Right cardiac atrium (tissue), 5 donors: ENCODE measurements at regions of chr19 and their contacts with region 1.

Region 1: DNA sequence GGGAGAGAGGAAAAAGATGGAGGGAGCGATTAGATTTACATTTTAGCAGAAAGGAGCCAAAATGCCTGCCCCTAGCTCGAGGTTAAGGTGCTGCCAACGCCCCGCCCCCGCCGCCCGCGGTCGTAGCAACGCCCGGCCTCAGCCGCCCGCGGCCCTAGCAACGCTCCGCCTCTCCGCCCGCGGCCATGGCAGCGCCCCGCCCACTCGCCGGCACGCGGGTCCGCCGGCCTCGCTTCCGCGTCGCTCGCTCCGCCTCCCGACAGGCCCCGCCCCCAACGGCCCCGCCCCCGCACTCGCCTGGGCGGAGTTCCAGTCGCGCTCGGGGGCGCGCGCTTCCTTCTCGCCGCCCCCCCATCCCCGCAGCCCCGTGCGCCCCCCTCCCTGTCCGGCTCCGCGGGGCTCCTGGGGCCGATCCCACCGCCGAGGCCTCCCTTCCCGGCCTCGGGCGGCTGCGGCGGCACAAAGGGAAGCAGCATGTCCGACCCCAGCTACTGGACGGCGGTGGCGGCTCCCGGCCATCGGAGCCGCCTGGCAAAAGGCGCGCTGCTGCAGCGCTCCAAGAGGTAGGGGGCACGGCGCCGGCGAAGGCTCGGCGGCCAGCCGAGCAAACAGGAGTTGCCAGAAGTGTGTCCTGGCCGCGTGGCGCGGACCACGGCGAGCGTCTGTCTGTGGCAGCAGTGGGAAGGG is 20.3 kb downstream of the MAST3 start:
- DNase-seq: peak; percentile 91 to 97 (median 97)
- ATAC-seq: peak; percentile 94
- H3K4me3 ChIP-seq: peak overlapping the region; percentile 83
- H3K27ac ChIP-seq: no peak overlapping the region
- H3K4me1 ChIP-seq: peaks cover 3% of the 10 kb centered on the region
- H3K27me3 ChIP-seq: no peaks in the 10 kb centered on the region

Region 2: DNA sequence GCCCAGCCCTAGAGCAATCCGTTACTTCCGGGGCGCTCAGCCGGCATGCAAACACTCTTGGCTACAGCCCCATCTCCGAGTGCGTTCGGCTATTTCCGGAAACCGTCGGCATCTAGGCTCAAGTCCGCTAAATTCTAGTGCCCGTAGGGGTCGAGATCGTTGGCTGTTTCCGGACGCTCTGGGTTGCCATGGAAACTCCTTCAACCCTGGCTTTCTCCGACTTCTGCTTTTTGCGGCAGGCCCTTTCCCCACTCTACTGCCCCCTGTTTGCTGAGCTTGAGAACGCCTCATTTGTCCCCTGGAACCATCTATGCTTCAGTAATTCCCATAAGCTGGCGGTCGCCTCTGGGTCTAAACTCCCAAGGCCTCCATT is 34.6 kb after region 1 on chr19:
- intact Hi-C with region 1: loop called in 2 of 4 experiments (anchors 5 kb)
- DNase-seq: peak; percentile 96 to 99 (median 98)
- ATAC-seq: peak; percentile 69 to 71
- H3K4me3 ChIP-seq: peak overlapping the region; percentile 84
- H3K27ac ChIP-seq: peak overlapping the region; percentile 99
- H3K4me1 ChIP-seq: peaks cover 11% of the 10 kb centered on the region
- H3K27me3 ChIP-seq: no peaks in the 10 kb centered on the region

Region 3: DNA sequence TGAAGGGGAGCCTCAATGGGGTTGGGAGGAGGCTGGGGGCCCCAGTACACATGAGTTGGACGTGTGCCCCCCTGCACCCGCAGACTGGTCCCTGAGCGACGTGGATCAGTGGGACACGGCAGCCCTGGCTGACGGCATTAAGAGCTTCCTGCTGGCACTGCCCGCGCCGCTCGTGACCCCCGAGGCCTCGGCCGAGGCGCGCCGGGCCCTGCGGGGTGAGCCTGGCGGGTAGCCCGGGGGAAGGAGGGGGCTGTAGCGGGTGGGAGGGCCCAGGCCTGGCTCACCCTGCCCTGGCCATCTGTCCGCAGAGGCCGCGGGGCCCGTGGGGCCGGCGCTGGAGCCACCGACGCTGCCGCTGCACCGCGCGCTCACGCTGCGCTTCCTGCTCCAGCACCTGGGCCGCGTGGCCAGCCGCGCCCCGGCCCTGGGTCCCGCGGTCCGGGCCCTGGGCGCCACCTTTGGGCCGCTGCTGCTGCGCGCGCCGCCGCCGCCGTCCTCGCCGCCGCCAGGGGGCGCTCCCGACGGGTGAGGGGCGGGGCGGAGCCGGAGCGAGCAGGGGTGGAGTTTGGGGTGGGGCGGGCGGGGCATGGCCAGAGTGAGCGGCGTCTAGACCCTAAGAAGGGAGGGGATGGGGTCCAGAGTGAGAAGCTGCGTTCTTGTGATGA is 43.3 kb after region 1 on chr19:
- intact Hi-C with region 1: loop called in 3 of 4 experiments (anchors 5 to 10 kb)
- DNase-seq: peak; percentile 74 to 92 (median 89)
- ATAC-seq: peak; percentile 71 to 78
- H3K4me3 ChIP-seq: peak overlapping the region; percentile 44
- H3K27ac ChIP-seq: peak overlapping the region; percentile 55
- H3K4me1 ChIP-seq: peaks cover 7% of the 10 kb centered on the region
- H3K27me3 ChIP-seq: no peaks in the 10 kb centered on the region

Region 4: DNA sequence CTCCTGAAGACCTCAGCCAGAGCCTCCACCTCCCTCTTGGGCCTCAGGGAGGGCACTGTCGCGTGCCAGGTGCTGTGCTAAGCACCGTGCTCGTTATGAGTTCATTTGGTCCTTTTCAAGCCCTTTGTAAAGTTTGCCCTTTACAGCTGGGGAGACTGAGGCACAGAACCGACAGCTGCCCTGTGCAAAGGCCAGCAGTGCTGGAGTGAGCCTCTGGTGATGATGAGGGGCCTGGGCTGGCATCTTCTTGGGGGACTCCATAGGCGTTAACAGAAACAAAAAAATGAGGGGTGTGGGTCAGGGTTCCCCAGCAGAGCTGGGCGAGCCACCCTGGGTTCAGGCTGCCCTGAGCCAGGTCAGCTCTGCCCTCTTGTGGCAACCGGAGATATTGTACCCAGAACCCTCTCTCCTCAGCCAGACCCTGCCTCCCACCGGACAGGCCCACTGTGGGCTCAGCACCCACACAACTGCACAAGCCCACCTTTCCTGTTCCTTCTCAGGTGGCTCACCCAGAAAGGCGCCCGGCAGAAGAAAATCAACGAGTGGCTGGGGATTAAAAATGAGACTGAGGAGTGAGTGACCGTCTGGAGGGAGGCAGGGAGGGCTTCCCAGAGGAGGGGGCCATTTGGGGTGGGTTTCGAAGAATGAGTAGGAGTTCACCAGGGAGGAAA is 50.3 kb after region 1 on chr19:
- intact Hi-C with region 1: loop called in 3 of 4 experiments (anchors 5 to 10 kb)
- DNase-seq: peak in 1 of 3 donors; percentile 74
- ATAC-seq: peak; percentile 55 to 59
- H3K4me3 ChIP-seq: no peak overlapping the region
- H3K27ac ChIP-seq: no peak overlapping the region
- H3K4me1 ChIP-seq: no peaks in the 10 kb centered on the region
- H3K27me3 ChIP-seq: no peaks in the 10 kb centered on the region

Region 5: DNA sequence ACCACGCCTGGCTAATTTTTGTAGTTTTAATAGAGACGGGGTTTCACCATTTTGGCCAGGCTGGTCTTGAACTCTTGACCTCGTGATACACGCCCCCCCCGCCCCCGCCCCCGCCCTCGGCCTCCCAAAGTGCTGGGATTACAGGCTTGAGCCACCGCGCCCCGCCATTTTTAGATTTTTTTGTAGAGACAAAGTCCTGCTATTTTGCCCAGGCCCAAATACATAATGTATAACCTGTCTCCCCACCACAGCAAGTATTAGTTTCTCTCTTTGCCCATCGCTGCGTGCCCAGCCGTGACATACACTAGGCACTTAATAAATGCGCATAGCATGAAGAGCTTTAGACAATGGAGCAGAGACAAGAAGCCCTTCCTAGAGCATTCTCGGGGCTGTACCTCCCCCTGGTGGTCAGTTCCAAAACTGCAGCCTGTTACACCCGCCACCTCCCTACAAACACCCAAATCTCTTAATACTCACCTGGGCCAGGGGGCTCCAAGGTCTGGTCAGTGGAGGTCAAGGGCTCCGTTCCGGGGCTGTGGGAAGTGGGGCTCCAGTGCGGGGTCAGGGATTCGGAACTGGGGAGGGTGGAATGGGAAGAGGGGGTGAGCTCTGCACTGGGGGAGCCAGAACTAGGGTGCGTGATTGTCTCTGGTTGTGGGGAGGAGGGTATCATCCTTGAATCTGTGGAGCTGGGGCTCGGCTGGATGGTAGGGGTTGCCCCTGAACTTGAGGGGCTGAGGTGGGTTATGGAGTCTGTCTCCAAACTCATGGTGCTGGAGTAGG is 133.9 kb after region 1 on chr19:
- intact Hi-C with region 1: loop called in 2 of 4 experiments (anchors 5 kb)
- DNase-seq: peak; percentile 66 to 83 (median 83)
- ATAC-seq: peak; percentile 62 to 66
- H3K4me3 ChIP-seq: no peak overlapping the region
- H3K27ac ChIP-seq: no peak overlapping the region
- H3K4me1 ChIP-seq: no peaks in the 10 kb centered on the region
- H3K27me3 ChIP-seq: no peaks in the 10 kb centered on the region

Region 6: GRCh38 chr19:18542936-18543815 is 425.3 kb after region 1 on chr19 and contains the start of gene FKBP8:
- intact Hi-C with region 1: no loop called
- DNase-seq: peak; percentile 94 to 98 (median 98)
- ATAC-seq: peak; percentile 97 to 99
- H3K4me3 ChIP-seq: peak within 1 kb of the TSS; percentile 88
- H3K27ac ChIP-seq: peak within 1 kb of the TSS; percentile 91
- H3K4me1 ChIP-seq: peaks cover 3% of the 10 kb centered on the region
- H3K27me3 ChIP-seq: no peaks in the 10 kb centered on the region
- total RNA-seq, gene FKBP8: 204 to 236 (median 213) TPM